Transverse colon (tissue), 4 donors: ENCODE measurements at regions of chr5 and their contacts with region 1.

Region 1: GRCh38 chr5:30918171-30918570 is 275.3 kb upstream of the CDH6 start:
- DNase-seq: no peak
- H3K4me3 ChIP-seq: no peak overlapping the region
- H3K27ac ChIP-seq: no peak overlapping the region
- H3K4me1 ChIP-seq: no peaks in the 10 kb centered on the region
- H3K27me3 ChIP-seq: no peaks in the 10 kb centered on the region
- CTCF ChIP-seq: no peak
- EP300 ChIP-seq: no peak
- POLR2A ChIP-seq: no peak

Region 2: GRCh38 chr5:30600892-30601291 is 317.3 kb before region 1 on chr5:
- in situ Hi-C with region 1: no loop called
- intact Hi-C with region 1: loop called (anchors 2 kb)
- DNase-seq: no peak
- H3K4me3 ChIP-seq: no peak overlapping the region
- H3K27ac ChIP-seq: no peak overlapping the region
- H3K4me1 ChIP-seq: no peaks in the 10 kb centered on the region
- H3K27me3 ChIP-seq: no peaks in the 10 kb centered on the region
- CTCF ChIP-seq: no peak
- EP300 ChIP-seq: no peak
- POLR2A ChIP-seq: no peak

Region 3: GRCh38 chr5:30874241-30875034 is 43.7 kb before region 1 on chr5:
- in situ Hi-C with region 1: no loop called
- intact Hi-C with region 1: no loop called
- DNase-seq: peak; percentile 22
- H3K4me3 ChIP-seq: no peak overlapping the region
- H3K27ac ChIP-seq: no peak overlapping the region
- H3K4me1 ChIP-seq: no peaks in the 10 kb centered on the region
- H3K27me3 ChIP-seq: no peaks in the 10 kb centered on the region
- CTCF ChIP-seq: no peak
- EP300 ChIP-seq: no peak
- POLR2A ChIP-seq: no peak